ENCODE measurements at regions of chr20 and their contacts with region 1.

Region 1: GRCh38 chr20:36573103-36573794 is at the start of gene TGIF2:
- DNase-seq: peak; percentile 86
- H3K4me3 Mint-ChIP-seq: peak within 1 kb of the TSS; percentile 92
- H3K27ac Mint-ChIP-seq: peak within 1 kb of the TSS; percentile 87
- H3K4me1 Mint-ChIP-seq: peaks cover 34% of the 10 kb centered on the region
- H3K27me3 Mint-ChIP-seq: no peaks in the 10 kb centered on the region
- total RNA-seq, gene TGIF2: 28.0 to 33.5 TPM

Region 2: GRCh38 chr20:36585463-36586108 is 12.3 kb after region 1 on chr20:
- CTCF ChIA-PET with region 1: interaction called, 15 read pairs
- POLR2A ChIA-PET with region 1: interaction called, 111 read pairs
- DNase-seq: no peak
- H3K4me3 Mint-ChIP-seq: no peak overlapping the region
- H3K27ac Mint-ChIP-seq: no peak overlapping the region
- H3K4me1 Mint-ChIP-seq: peaks cover 40% of the 10 kb centered on the region
- H3K27me3 Mint-ChIP-seq: no peaks in the 10 kb centered on the region

Region 3: DNA sequence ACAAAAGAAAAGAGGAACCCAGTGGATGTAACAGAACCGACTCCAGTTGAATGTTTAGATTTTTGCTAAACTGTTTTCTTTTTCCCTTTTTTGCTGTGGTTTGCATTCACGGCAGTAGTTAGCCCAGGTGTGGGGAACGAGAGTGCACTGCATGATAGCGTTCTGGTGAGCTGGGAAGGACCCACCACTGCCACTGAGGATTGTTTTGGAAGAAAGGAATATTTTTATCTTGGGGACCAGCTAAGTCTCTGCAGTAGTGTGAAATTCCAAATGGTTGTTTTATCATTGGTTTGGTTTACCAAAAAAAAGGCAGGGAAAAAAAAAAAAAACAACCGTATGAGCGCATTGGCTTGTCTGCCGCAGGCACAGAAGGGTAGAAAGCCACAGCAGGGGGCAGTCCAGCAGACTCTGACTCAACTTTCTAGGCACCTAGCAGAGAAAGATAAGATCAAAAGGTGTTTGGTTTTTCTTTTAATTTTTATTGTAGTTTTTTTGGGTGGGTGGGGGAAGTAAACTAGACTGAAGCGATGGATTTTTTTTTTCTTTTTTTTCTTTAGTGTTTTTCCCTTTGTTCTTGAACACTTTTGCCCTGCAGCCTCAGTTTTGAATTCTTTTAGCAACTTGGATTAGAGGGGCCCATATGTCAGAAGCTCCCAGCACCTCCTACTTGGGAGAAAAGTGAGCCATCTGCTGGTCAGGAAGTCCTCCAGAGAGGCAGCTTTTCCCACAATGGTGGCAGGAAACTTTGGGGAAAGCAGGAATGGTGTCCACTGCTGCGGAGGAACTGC is 18.8 kb after region 1 on chr20:
- CTCF ChIA-PET with region 1: interaction called, 18 read pairs
- POLR2A ChIA-PET with region 1: interaction called, 111 read pairs
- DNase-seq: peak; percentile 65
- H3K4me3 Mint-ChIP-seq: no peak overlapping the region
- H3K27ac Mint-ChIP-seq: peak overlapping the region; percentile 76
- H3K4me1 Mint-ChIP-seq: peaks cover 61% of the 10 kb centered on the region
- H3K27me3 Mint-ChIP-seq: no peaks in the 10 kb centered on the region

Measured in activated CD4-positive, alpha-beta memory T cell treated with anti-CD3 and anti-CD28 coated beads, Interleukin-2, amount 10 ng/mL, durations not matched to agents 7 days and 5 days (primary cell).